Breast epithelium (tissue), 4 donors: ENCODE measurements at regions of chr5 and their contacts with region 1.

Region 1: GRCh38 chr5:114266374-114266773 is 95.5 kb upstream of the KCNN2 start:
- DNase-seq: no peak
- H3K4me3 ChIP-seq: no peak overlapping the region
- H3K27ac ChIP-seq: no peak overlapping the region
- H3K4me1 ChIP-seq: no peaks in the 10 kb centered on the region
- H3K27me3 ChIP-seq: no peaks in the 10 kb centered on the region
- CTCF ChIP-seq: no peak
- POLR2A ChIP-seq: no peak

Region 2: DNA sequence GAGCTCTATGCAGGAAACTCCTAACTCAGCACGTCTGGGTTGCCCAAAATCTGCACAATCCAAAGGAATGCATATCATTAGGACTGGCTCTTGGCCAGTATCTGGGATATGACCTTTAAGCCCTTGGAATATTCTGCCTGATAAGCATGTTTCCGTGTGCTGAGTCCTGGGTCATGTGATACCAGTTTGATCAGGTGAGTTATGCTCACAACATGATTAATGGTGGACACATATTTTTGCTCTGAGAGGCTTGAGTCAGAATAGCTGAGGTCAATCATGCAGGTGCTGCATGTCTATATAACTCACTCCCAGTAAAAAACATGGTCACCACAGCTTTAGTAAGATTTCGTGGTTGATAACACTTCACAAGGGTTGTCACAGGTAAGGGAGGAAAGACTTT is 344.0 kb before region 1 on chr5:
- intact Hi-C with region 1: loop called (anchors 5 kb)
- DNase-seq: no peak
- H3K4me3 ChIP-seq: no peak overlapping the region
- H3K27ac ChIP-seq: no peak overlapping the region
- H3K4me1 ChIP-seq: no peaks in the 10 kb centered on the region
- H3K27me3 ChIP-seq: no peaks in the 10 kb centered on the region
- CTCF ChIP-seq: no peak
- POLR2A ChIP-seq: no peak

Region 3: DNA sequence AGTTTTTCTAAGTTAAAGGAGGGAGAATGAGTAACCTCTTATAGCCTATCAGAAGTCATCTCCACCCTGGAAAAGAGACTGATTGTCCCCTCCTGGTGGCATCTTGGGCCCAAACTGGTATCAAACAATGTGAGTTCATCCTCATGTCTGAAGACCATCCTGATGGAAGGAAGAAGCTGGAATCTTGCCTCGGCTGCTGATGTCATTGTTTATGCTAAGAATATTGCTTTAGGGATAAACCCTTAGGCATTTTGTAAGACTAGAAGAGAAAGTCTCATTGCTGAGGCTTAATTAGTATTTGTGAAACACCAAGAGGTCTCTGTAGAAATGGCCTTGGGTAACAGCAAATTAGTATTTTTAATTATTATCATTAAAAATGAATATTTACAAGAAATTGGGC is 29.8 kb after region 1 on chr5:
- intact Hi-C with region 1: no loop called
- DNase-seq: no peak
- H3K4me3 ChIP-seq: no peak overlapping the region
- H3K27ac ChIP-seq: no peak overlapping the region
- H3K4me1 ChIP-seq: no peaks in the 10 kb centered on the region
- H3K27me3 ChIP-seq: no peaks in the 10 kb centered on the region
- CTCF ChIP-seq: no peak
- POLR2A ChIP-seq: no peak

Region 4: GRCh38 chr5:114695292-114695904 is 429.0 kb after region 1 on chr5:
- intact Hi-C with region 1: loop called (anchors 5 kb)
- DNase-seq: no peak
- H3K4me3 ChIP-seq: no peak overlapping the region
- H3K27ac ChIP-seq: no peak overlapping the region
- H3K4me1 ChIP-seq: no peaks in the 10 kb centered on the region
- H3K27me3 ChIP-seq: no peaks in the 10 kb centered on the region
- CTCF ChIP-seq: no peak
- POLR2A ChIP-seq: no peak